ENCODE measurements at regions of chr1 and their contacts with region 1.

Region 1: GRCh38 chr1:17606826-17607440 is 67.4 kb downstream of the ARHGEF10L start:
- DNase-seq: peak; percentile 50 to 70 (median 57)
- H3K4me3 ChIP-seq: no peak overlapping the region
- H3K27ac ChIP-seq: no peak overlapping the region
- H3K4me1 ChIP-seq: peaks cover 0 to 2% (median 0%) of the 10 kb centered on the region in 4 experiments
- H3K27me3 ChIP-seq: peaks cover 0 to 6% (median 0%) of the 10 kb centered on the region in 5 experiments

Region 2: DNA sequence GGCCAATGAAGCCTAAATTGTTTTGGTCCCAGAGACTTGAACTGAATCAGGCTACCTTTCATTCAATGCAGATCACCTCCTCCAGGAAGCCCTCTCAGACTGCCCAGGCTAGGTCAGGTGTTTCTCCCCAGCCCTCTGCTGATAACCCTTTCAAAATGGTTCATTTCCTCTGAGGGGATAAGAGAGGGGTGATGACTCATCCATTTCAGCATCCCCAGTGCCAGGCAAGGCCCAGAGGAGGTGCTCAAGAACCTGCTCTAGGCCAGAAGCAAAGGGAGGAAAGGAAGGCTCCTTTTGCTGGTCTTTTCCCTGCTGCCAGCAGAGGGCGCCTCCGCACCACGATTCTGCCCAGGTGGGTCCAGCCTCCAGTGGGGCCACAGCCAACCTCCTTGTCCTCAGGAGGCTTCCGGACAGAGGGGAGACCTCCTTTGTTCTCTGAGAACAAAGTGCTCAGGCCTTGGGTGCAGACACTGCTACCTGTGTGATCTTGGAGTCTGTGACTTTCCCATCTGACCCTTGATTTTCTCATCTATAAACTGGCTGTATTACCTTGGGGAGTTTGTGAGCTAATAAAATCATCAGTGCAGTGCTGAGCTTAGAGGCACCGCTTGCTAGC is 112.7 kb before region 1 on chr1:
- CTCF ChIA-PET with region 1: interaction called, 57 read pairs
- POLR2A ChIA-PET with region 1: no interaction called
- DNase-seq: peak; percentile 81 to 88 (median 86)
- H3K4me3 ChIP-seq: no peak overlapping the region
- H3K27ac ChIP-seq: no peak overlapping the region
- H3K4me1 ChIP-seq: no peaks in the 10 kb centered on the region
- H3K27me3 ChIP-seq: peaks cover 0 to 3% (median 0%) of the 10 kb centered on the region in 5 experiments

Region 3: GRCh38 chr1:17502326-17502778 is 104.6 kb before region 1 on chr1:
- CTCF ChIA-PET with region 1: interaction called, 152 read pairs
- POLR2A ChIA-PET with region 1: no interaction called
- DNase-seq: peak; percentile 70 to 86 (median 78)
- H3K4me3 ChIP-seq: no peak overlapping the region
- H3K27ac ChIP-seq: no peak overlapping the region
- H3K4me1 ChIP-seq: no peaks in the 10 kb centered on the region
- H3K27me3 ChIP-seq: peaks cover 0 to 5% (median 0%) of the 10 kb centered on the region in 5 experiments

Region 4: GRCh38 chr1:17511188-17511587 is 95.7 kb before region 1 on chr1:
- CTCF ChIA-PET with region 1: interaction called, 152 read pairs
- POLR2A ChIA-PET with region 1: no interaction called
- DNase-seq: no peak
- H3K4me3 ChIP-seq: no peak overlapping the region
- H3K27ac ChIP-seq: no peak overlapping the region
- H3K4me1 ChIP-seq: peaks cover 0 to 5% (median 3%) of the 10 kb centered on the region in 4 experiments
- H3K27me3 ChIP-seq: peaks cover 0 to 21% (median 9%) of the 10 kb centered on the region in 5 experiments

Region 5: GRCh38 chr1:17574516-17574915 is 32.4 kb before region 1 on chr1:
- CTCF ChIA-PET with region 1: interaction called, 28 read pairs
- POLR2A ChIA-PET with region 1: no interaction called
- DNase-seq: peak in 1 of 3 donors; percentile 24
- H3K4me3 ChIP-seq: peak overlapping the region in 1 of 7 experiments; percentile 6
- H3K27ac ChIP-seq: no peak overlapping the region
- H3K4me1 ChIP-seq: peaks cover 0 to 10% (median 5%) of the 10 kb centered on the region in 4 experiments
- H3K27me3 ChIP-seq: peaks cover 0 to 2% (median 0%) of the 10 kb centered on the region in 5 experiments

Region 6: DNA sequence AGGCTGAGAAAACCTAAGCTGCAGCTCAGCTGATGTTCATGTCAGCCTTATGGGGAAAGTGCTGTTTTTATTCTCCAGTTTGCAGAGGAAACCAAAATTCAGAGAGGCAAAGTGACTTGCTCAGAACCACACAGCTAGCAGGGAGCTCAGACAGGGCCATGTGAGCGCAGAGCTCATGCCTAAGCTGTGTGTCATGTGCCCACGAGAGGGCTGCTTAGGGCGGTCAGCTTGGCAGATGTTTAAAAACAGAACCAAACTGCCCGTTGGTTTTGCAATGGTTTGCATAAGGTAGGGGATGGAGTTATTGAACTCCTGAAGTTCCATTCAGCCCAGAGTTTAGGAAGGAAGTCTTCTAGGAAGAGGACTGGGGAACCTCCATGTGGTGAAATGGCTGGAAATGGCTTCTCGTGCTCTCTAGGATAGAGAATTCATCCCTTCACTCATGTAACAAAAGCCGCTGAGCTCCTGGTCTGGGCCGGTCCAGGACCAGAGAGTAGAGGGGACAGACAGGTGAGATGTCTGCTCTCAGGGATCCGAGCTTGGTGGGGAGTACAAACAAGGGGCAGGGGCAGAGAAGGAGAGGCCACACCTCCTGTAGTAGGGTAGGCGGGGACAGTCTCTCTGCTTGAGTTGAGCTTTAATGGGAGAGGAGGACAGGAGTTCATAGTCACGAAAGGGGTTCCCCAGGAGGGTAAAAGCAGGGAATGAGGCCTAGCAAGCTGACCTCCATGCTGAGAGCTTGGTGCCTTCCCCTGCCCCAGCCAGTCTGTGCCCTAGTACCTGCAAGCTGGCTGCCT is 20.6 kb before region 1 on chr1:
- CTCF ChIA-PET with region 1: interaction called, 30 read pairs
- POLR2A ChIA-PET with region 1: no interaction called
- DNase-seq: no peak
- H3K4me3 ChIP-seq: no peak overlapping the region
- H3K27ac ChIP-seq: no peak overlapping the region
- H3K4me1 ChIP-seq: peaks cover 0 to 27% (median 15%) of the 10 kb centered on the region in 4 experiments
- H3K27me3 ChIP-seq: no peaks in the 10 kb centered on the region

Region 7: DNA sequence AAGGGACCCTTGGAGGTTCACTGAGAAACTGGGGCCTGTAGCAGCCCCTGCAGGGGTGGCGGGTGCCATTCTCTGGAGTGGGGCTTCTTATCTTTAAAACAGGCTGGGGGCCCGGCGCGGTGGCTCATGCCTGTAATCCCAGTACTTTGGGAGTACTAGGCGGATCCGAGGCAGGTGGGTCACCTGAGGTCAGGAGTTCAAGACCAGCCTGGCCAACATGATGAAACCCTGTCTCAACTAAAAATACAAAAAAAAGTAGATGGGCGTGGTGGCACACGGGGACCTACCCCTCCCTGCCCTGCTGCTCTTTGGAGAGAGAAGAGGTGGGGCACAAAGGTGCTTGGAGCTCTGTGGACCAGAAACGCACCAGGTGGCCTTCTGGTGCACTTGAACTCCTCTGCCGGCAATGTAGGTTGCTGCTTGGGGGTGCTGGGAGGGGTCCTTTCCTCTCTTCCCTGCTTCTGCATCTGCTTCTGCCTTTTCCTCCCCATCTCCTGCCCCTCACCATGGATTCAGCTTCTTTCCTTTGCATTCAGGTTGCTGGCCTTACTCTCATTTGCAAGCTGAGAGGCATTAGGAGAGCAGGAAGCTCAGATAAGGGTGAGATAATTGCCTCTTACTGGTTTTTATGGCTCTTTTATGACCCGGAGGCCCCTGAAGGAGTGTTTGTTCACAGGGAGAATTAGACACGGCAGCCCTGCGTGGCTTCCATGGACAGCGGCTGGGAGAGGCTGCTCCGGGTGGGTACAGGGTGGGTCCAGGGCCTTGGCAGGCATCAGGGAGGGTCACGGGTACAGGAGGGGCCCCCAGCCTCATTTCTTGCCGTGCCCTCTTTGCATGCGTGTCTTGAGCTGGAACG is 10.1 kb before region 1 on chr1:
- CTCF ChIA-PET with region 1: interaction called, 13 read pairs
- POLR2A ChIA-PET with region 1: no interaction called
- DNase-seq: no peak
- H3K4me3 ChIP-seq: no peak overlapping the region
- H3K27ac ChIP-seq: no peak overlapping the region
- H3K4me1 ChIP-seq: no peaks in the 10 kb centered on the region
- H3K27me3 ChIP-seq: peaks cover 0 to 1% (median 0%) of the 10 kb centered on the region in 5 experiments

Region 8: GRCh38 chr1:17671741-17672140 is 64.8 kb after region 1 on chr1:
- CTCF ChIA-PET with region 1: no interaction called
- POLR2A ChIA-PET with region 1: no interaction called
- DNase-seq: peak; percentile 8 to 75 (median 52)
- H3K4me3 ChIP-seq: no peak overlapping the region
- H3K27ac ChIP-seq: no peak overlapping the region
- H3K4me1 ChIP-seq: peaks cover 0 to 5% (median 1%) of the 10 kb centered on the region in 4 experiments
- H3K27me3 ChIP-seq: no peaks in the 10 kb centered on the region

Region 9: GRCh38 chr1:17700945-17701810 is 94.2 kb after region 1 on chr1:
- CTCF ChIA-PET with region 1: no interaction called
- POLR2A ChIA-PET with region 1: no interaction called
- DNase-seq: no peak
- H3K4me3 ChIP-seq: no peak overlapping the region
- H3K27ac ChIP-seq: no peak overlapping the region
- H3K4me1 ChIP-seq: peaks cover 0 to 30% (median 14%) of the 10 kb centered on the region in 4 experiments
- H3K27me3 ChIP-seq: peaks cover 0 to 3% (median 0%) of the 10 kb centered on the region in 5 experiments

Measured in common myeloid progenitor, CD34-positive (primary cell).